Mammary epithelial cell (primary cell): ENCODE measurements at regions of chr10 and their contacts with region 1.

Region 1: DNA sequence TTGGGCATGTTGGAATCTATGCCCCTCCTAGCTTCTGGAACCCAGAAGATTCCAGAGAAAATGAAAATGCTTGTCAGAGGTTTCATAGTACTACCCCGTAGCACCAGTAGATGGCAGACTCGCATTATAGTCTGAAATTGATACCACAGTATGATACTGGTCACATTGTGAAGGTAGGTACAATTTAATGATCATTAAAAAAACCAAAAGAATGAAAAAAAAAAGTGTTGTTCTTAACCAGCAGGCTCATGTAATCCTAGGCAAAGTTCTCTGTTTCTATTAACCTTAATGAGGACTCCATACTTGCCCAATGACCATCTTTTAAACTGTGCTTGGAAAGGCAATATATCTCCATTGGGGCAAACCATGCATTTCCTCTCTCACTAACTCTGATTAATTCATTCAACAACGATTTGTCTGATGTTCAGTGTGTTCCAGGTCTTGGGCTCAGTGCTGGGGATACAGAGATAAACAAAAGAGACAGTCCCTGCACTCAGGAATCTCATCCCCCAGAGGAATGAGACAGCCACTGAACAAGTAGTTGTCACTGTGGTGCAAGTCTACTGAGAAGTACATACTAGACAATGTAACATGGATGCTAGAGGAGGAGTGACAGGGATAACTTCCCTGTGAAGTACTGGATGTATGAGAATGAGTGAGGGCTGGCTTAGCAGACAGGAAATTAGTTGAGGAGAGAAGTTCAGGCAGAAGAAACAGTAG is 223.5 kb upstream of the PHYHIPL start:
- DNase-seq: peak; percentile 35
- H3K4me3 ChIP-seq: no peak overlapping the region
- H3K27ac ChIP-seq: no peak overlapping the region
- H3K4me1 ChIP-seq: peaks cover 21% of the 10 kb centered on the region
- H3K27me3 ChIP-seq: no peaks in the 10 kb centered on the region
- CTCF ChIP-seq: peak; percentile 84

Region 2: GRCh38 chr10:59181668-59182067 is 228.8 kb after region 1 on chr10:
- CTCF ChIA-PET with region 1: no interaction called
- dilution Hi-C with region 1: no loop called
- in situ Hi-C with region 1: loop called in 1 of 2 experiments (anchors 10 kb)
- intact Hi-C with region 1: loop called (anchors 1 kb)
- DNase-seq: peak; percentile 47
- H3K4me3 ChIP-seq: no peak overlapping the region
- H3K27ac ChIP-seq: no peak overlapping the region
- H3K4me1 ChIP-seq: peaks cover 8% of the 10 kb centered on the region
- H3K27me3 ChIP-seq: peaks cover 2% of the 10 kb centered on the region
- CTCF ChIP-seq: peak; percentile 58 to 72

Region 3: DNA sequence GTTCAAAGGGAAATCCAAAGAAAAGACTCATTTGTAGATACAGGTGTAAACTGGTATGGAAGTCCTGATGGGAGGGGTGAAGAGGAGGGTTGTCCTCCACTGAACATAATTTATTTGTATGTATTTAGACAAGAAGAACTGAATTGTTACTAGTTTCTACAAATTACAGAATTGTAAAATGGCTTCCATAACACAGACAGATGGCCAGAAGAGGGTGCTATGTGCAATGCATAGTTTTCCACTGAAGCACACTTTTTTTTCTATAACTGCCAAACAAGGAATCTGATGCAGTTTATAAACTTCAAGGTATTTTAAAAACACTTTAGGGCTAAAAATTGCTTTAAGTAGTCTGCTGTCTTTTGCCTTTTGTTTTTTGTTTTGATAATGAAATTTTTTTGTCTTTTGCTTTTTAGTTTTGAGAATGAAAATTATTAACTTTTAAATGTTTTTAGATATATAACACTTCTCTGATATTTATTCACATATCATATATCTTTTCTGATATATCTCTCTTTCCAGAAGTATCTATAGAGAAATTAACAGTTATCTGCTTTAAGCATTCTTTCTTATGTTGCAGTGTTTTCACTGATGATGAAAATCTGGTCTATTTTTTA is 282.0 kb after region 1 on chr10:
- CTCF ChIA-PET with region 1: no interaction called
- dilution Hi-C with region 1: no loop called
- in situ Hi-C with region 1: no loop called
- intact Hi-C with region 1: loop called (anchors 1 kb)
- DNase-seq: peak; percentile 12
- H3K4me3 ChIP-seq: no peak overlapping the region
- H3K27ac ChIP-seq: no peak overlapping the region
- H3K4me1 ChIP-seq: no peaks in the 10 kb centered on the region
- H3K27me3 ChIP-seq: no peaks in the 10 kb centered on the region
- CTCF ChIP-seq: peak; percentile 56 to 72

Region 4: DNA sequence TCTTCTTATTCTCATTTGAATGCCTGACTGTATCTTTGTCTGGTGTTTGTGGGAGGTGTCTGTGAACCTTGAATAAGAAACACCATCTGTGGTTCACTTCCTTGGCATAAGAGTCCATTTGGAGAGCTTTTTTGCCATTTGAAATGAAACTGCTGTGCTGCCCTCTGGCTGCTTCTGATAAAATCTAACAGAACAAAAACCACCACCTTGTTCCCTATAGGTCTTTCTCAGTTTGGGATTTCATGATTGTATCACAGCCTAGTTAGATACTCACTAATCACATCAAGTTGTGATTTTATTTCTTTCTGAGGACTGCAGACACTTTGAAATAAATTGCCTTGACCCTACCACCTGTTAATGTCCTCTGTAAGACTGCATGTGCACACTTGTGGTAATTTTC is 512.2 kb after region 1 on chr10:
- CTCF ChIA-PET with region 1: no interaction called
- dilution Hi-C with region 1: no loop called
- in situ Hi-C with region 1: no loop called
- intact Hi-C with region 1: loop called (anchors 10 kb)
- DNase-seq: peak; percentile 27
- H3K4me3 ChIP-seq: no peak overlapping the region
- H3K27ac ChIP-seq: no peak overlapping the region
- H3K4me1 ChIP-seq: no peaks in the 10 kb centered on the region
- H3K27me3 ChIP-seq: no peaks in the 10 kb centered on the region
- CTCF ChIP-seq: peak; percentile 18 to 62

Region 5: GRCh38 chr10:59580026-59580863 is 627.3 kb after region 1 on chr10:
- CTCF ChIA-PET with region 1: no interaction called
- dilution Hi-C with region 1: no loop called
- in situ Hi-C with region 1: no loop called
- intact Hi-C with region 1: loop called (anchors 10 kb)
- DNase-seq: no peak
- H3K4me3 ChIP-seq: no peak overlapping the region
- H3K27ac ChIP-seq: no peak overlapping the region
- H3K4me1 ChIP-seq: peaks cover 4% of the 10 kb centered on the region
- H3K27me3 ChIP-seq: no peaks in the 10 kb centered on the region
- CTCF ChIP-seq: peak; percentile 43 to 62